Activated CD4-positive, alpha-beta T cell treated with anti-CD3 and anti-CD28 coated beads for 36 hours (primary cell): ENCODE measurements at regions of chr9 and their contacts with region 1.

Region 1: DNA sequence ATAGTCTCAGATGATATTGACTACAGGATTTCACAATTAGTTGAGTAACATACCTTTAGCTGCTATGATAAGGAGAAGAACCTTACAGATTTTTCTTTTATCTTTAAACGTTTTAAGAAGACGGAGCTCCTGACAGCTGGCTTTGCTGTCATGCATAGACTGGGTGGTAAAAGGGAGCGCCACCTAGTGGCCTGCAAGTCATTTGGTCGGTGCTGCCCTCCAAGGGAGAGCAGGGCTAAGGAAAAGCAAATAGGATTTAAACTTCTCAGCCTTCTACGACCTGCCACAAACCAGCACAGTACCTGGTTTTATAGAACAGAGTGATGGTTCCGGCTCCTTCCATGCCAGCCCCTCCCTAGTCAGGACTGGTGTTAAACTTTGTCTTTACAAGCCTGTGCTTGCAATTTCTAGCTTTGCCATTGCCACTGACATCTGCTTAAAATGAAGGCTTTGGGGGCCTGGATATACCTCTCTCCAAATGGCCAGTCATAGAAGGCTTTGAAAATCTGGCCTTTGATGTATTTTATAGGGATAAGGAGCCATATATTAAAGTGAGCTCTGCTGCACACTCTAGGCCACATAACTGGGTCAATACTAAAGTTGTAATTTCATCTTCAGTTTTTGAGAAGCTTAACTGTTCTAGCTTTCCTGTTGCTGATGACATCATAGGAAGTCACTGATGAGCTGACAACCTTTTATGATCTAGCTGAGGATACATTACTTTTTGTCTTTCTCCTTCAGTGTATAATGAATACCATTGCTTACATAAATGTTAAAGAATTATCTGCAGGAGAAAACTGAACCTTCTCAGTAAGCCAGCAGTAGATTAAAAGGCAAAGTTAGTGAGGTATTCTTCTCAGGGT is 31.1 kb upstream of the ADAMTSL1 start:
- DNase-seq: peak; percentile 77
- ATAC-seq: peak; percentile 84
- H3K4me3 Mint-ChIP-seq: no peak overlapping the region
- H3K27ac Mint-ChIP-seq: no peak overlapping the region
- H3K4me1 Mint-ChIP-seq: peaks cover 3% of the 10 kb centered on the region
- H3K27me3 Mint-ChIP-seq: peaks cover 19% of the 10 kb centered on the region

Region 2: GRCh38 chr9:17531642-17532254 is 911.1 kb before region 1 on chr9:
- CTCF ChIA-PET with region 1: no interaction called
- POLR2A ChIA-PET with region 1: no interaction called
- intact Hi-C with region 1: loop called in 1 of 2 experiments (anchors 5 kb)
- DNase-seq: peak; percentile 61
- ATAC-seq: no peak
- H3K4me3 Mint-ChIP-seq: no peak overlapping the region
- H3K27ac Mint-ChIP-seq: no peak overlapping the region
- H3K4me1 Mint-ChIP-seq: no peaks in the 10 kb centered on the region
- H3K27me3 Mint-ChIP-seq: no peaks in the 10 kb centered on the region

Region 3: DNA sequence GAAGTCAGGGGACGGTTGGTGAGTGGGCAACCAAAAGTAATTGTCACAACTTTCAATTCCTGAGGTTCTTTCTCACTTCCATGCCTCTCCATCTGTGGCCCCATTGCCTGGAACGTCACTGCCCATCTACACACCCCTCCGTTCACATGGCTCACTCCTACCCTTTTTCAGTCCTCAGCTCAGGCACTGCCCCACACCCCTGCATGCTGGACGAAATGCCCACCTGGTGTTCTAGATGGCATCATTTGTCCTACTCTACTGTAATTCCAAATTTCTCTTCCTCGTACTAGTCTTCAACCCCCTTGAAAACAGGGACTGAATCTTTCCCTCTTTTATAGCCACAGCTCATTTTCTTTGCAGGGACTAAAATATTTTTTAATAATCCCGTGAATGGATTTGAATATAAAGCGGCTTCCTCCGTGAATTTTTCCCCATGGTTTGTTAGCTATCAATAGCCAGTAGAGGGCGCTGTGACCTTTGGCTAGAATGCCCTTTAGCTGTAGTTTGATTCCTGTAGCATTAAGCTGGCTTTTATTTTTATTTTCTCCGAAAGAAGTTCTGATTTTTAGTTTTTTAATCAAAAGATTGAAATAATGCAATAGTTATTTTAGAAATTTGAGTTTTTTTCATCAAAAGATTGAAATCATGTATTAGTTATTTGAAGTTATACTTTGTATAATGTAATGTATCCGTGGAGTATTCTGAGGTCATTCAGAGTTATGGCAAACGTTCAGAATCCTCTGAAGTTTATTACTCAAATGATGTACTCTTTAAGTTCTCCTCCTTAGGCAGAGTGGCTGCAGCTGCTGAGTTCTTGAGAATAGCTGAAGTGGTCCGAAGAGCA is 631.9 kb before region 1 on chr9:
- CTCF ChIA-PET with region 1: no interaction called
- POLR2A ChIA-PET with region 1: no interaction called
- intact Hi-C with region 1: loop called in 1 of 2 experiments (anchors 1 kb)
- DNase-seq: peak; percentile 63
- ATAC-seq: no peak
- H3K4me3 Mint-ChIP-seq: no peak overlapping the region
- H3K27ac Mint-ChIP-seq: no peak overlapping the region
- H3K4me1 Mint-ChIP-seq: no peaks in the 10 kb centered on the region
- H3K27me3 Mint-ChIP-seq: no peaks in the 10 kb centered on the region

Region 4: GRCh38 chr9:18255158-18255629 is 187.7 kb before region 1 on chr9:
- CTCF ChIA-PET with region 1: interaction called, 43 read pairs
- POLR2A ChIA-PET with region 1: no interaction called
- intact Hi-C with region 1: loop called (anchors 1 kb)
- DNase-seq: peak; percentile 87
- ATAC-seq: peak; percentile 77
- H3K4me3 Mint-ChIP-seq: no peak overlapping the region
- H3K27ac Mint-ChIP-seq: no peak overlapping the region
- H3K4me1 Mint-ChIP-seq: peaks cover 1% of the 10 kb centered on the region
- H3K27me3 Mint-ChIP-seq: peaks cover 18% of the 10 kb centered on the region

Region 5: DNA sequence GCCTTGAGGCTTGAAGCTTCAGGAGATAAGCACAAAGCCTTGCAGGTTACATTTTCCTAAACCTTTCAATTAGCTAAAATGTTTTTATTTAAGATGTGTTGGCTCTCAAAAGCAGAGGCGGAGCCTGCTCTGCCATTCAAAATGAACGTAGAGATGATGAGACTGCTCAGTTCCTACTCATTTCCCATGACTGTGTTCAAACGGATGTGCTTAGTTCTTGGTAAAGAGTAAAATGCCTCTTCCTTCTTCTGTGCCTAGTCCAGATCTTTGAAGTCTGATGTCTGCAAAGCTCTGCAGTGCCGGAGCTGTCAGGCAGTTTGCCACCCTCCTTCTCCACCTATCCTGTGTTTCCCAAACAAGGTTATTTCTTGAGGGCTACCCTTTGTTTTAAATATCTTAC is 15.2 kb before region 1 on chr9:
- CTCF ChIA-PET with region 1: interaction called, 14 read pairs
- POLR2A ChIA-PET with region 1: no interaction called
- intact Hi-C with region 1: no loop called
- DNase-seq: no peak
- ATAC-seq: no peak
- H3K4me3 Mint-ChIP-seq: no peak overlapping the region
- H3K27ac Mint-ChIP-seq: no peak overlapping the region
- H3K4me1 Mint-ChIP-seq: no peaks in the 10 kb centered on the region
- H3K27me3 Mint-ChIP-seq: peaks cover 2% of the 10 kb centered on the region